ENCODE measurements at regions of chr3 and their contacts with region 1.

Region 1: DNA sequence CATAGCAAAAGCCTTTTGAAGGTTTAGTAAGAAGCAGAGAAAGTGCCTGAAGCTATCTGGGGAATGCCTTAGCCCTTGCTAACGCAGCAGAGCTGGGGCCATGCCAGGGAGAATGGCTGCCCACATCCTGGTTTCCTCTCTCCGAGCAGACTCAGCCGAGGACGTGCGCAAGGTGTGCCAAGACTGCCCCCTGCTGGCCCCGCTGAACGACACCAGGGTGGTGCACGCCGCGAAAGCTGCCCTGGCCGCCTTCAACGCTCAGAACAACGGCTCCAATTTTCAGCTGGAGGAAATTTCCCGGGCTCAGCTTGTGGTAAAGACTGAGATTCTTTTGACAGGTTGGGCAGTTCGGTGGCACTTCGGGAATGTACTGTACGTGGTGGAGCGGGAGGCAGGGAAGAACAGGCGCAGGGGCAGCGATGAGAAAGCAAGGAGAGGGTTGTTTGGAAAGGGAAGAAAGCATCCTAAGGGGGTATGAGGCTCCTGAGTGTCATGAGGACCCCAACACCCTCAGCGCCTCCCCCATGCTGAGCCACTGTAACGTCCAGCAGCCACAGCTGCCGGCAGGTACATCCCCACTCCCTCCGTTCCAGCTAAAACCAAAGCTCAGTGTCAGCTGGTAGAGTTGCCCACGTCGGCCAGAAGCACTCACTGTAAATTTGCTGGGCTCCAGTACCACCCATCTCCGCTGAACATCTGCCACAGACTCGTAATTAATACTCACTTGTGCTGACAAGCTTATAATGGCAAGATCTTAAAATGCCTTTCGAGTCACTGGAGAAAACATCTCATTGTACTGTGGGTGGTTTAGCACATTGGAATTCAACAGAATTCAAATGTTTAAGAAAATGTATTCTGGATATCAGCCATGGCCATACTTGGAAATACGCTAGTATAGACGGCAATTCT is 4.4 kb downstream of the AHSG start:
- DNase-seq: peak; percentile 83
- H3K4me3 ChIP-seq: no peak overlapping the region
- H3K27ac ChIP-seq: no peak overlapping the region
- H3K4me1 ChIP-seq: peaks cover 5% of the 10 kb centered on the region
- H3K27me3 ChIP-seq: peaks cover 4 to 19% of the 10 kb centered on the region in 2 experiments
- CTCF ChIP-seq: peak; percentile 98
- POLR2A ChIP-seq: no peak

Region 2: GRCh38 chr3:186259612-186260383 is 357.5 kb before region 1 on chr3:
- CTCF ChIA-PET with region 1: interaction called, 9 read pairs
- POLR2A ChIA-PET with region 1: no interaction called
- dilution Hi-C with region 1: no loop called
- intact Hi-C with region 1: loop called (anchors 1 kb)
- DNase-seq: peak; percentile 58
- H3K4me3 ChIP-seq: no peak overlapping the region
- H3K27ac ChIP-seq: no peak overlapping the region
- H3K4me1 ChIP-seq: no peaks in the 10 kb centered on the region
- H3K27me3 ChIP-seq: no peaks in the 10 kb centered on the region
- CTCF ChIP-seq: peak; percentile 87 to 98
- POLR2A ChIP-seq: no peak

Region 3: DNA sequence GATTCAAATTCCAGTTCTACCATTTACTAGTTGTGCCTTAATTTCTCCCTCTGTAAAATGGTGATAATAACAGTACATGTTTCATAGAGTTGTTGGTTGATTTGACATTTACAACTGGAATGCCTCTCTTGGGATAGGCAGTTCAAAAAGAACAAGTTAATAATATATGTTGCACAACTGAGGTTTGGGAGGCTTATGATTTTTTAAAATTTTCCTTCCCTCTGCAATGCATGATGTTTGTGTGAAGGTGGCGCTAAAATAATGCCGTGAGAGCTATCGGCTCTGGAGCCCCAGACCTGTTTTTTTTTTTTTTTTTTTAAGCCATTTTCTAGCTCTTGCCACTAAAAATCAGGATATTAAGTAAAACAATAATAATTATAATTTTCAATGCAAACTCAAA is 28.2 kb before region 1 on chr3:
- CTCF ChIA-PET with region 1: interaction called, 17 read pairs
- POLR2A ChIA-PET with region 1: no interaction called
- dilution Hi-C with region 1: no loop called
- intact Hi-C with region 1: no loop called
- DNase-seq: no peak
- H3K4me3 ChIP-seq: no peak overlapping the region
- H3K27ac ChIP-seq: no peak overlapping the region
- H3K4me1 ChIP-seq: no peaks in the 10 kb centered on the region
- H3K27me3 ChIP-seq: no peaks in the 10 kb centered on the region
- CTCF ChIP-seq: no peak
- POLR2A ChIP-seq: no peak

Region 4: GRCh38 chr3:186754006-186754405 is 136.7 kb after region 1 on chr3:
- CTCF ChIA-PET with region 1: interaction called, 7 read pairs
- POLR2A ChIA-PET with region 1: no interaction called
- dilution Hi-C with region 1: no loop called
- intact Hi-C with region 1: loop called (anchors 1 kb)
- DNase-seq: no peak
- H3K4me3 ChIP-seq: no peak overlapping the region
- H3K27ac ChIP-seq: no peak overlapping the region
- H3K4me1 ChIP-seq: peaks cover 4% of the 10 kb centered on the region
- H3K27me3 ChIP-seq: no peaks in the 10 kb centered on the region
- CTCF ChIP-seq: no peak
- POLR2A ChIP-seq: no peak

Region 5: DNA sequence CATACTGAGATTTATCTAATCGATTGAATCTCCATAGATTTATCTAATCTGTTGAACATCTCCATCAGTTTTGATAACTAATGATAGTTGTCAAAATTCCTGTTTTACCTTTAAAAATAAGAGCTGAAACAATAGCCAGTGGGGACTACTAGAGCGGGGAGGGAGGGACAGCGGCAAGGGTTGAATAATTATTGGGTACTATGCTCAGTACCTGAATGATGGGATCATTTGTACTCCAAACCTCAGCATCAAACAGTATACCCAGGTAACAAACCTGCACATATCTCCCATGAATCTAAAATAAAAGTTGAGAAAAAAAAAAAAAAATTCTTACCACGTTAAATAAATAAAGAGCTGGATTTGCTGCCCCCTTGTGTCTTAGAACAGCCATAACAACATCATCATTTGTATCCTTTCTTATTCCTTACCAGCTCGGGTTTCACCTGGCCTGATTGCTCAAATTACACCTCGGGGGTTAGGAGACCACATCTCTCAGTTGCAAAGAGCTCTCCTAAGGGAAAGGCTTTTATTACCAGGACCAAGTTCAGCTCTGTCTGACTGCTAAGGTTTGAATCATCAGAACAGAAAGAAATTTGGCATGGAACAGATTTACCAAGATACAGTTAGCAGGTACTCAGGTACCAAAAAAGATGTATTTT is 547.7 kb after region 1 on chr3:
- CTCF ChIA-PET with region 1: interaction called, 18 read pairs
- POLR2A ChIA-PET with region 1: no interaction called
- dilution Hi-C with region 1: no loop called
- intact Hi-C with region 1: loop called (anchors 10 kb)
- DNase-seq: peak; percentile 62
- H3K4me3 ChIP-seq: no peak overlapping the region
- H3K27ac ChIP-seq: no peak overlapping the region
- H3K4me1 ChIP-seq: no peaks in the 10 kb centered on the region
- H3K27me3 ChIP-seq: peaks cover 17 to 28% of the 10 kb centered on the region in 2 experiments
- CTCF ChIP-seq: peak; percentile 54 to 61
- POLR2A ChIP-seq: no peak

Measured in endothelial cell of umbilical vein (primary cell).